H1 (cell line): ENCODE measurements at regions of chr1 and their contacts with region 1.

Region 1: DNA sequence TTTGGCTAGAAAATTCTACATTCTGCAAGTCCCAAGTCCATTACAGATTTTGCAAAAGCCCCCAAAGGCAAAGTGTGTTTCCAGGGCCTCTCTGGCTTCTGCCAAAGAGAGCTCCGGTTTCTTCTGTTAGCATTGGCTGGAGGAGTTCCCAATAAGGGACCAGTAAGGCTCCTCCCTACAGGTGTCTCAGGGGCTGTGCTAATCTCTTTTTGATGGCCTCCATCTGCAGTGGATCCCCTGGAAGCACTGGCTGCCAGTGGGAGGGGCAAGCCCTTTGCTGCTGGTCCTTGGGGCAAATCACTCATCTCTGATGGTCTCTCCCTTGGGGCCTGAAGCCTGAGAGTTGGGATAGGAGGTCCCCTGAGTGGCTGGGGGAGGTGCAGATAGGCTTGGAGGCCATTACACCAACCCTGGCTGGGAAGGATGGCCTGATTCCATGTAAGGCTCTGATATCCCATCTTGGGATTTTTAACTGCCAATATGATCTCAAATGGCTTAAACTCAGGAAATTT is 89.1 kb upstream of the USP24 start:
- DNase-seq: no peak
- H3K4me3 ChIP-seq: no peak overlapping the region
- H3K27ac ChIP-seq: no peak overlapping the region
- H3K4me1 ChIP-seq: no peaks in the 10 kb centered on the region; a peak in 1 of 7 replicates
- H3K27me3 ChIP-seq: no peaks in the 10 kb centered on the region
- CTCF ChIP-seq: no peak
- EP300 ChIP-seq: no peak
- POLR2A ChIP-seq: no peak
- RAD21 ChIP-seq: no peak

Region 2: GRCh38 chr1:55284852-55285251 is 19.4 kb before region 1 on chr1:
- CTCF ChIA-PET with region 1: interaction called, 11 read pairs
- POLR2A ChIA-PET with region 1: no interaction called
- DNase-seq: no peak
- H3K4me3 ChIP-seq: no peak overlapping the region
- H3K27ac ChIP-seq: no peak overlapping the region
- H3K4me1 ChIP-seq: no peaks in the 10 kb centered on the region
- H3K27me3 ChIP-seq: no peaks in the 10 kb centered on the region
- CTCF ChIP-seq: peak in 2 of 3 experiments; percentile 46 to 55; a peak in 2 of 4 replicates
- EP300 ChIP-seq: no peak
- POLR2A ChIP-seq: no peak
- RAD21 ChIP-seq: peak; percentile 78 to 79